Activated B cell treated with CpG ODN at 0.5 μM for 24 hours (primary cell): ENCODE measurements at regions of chr2 and their contacts with region 1.

Region 1: GRCh38 chr2:25276569-25277465 is 64.9 kb downstream of the DNMT3A start:
- DNase-seq: peak; percentile 70
- ATAC-seq: peak; percentile 13
- H3K4me3 Mint-ChIP-seq: peak overlapping the region; percentile 67
- H3K27ac Mint-ChIP-seq: peak overlapping the region; percentile 76
- H3K4me1 Mint-ChIP-seq: peaks cover 88% of the 10 kb centered on the region
- H3K27me3 Mint-ChIP-seq: no peaks in the 10 kb centered on the region
- CTCF ChIP-seq: no peak

Region 2: GRCh38 chr2:25165992-25166875 is 110.6 kb before region 1 on chr2:
- CTCF ChIA-PET with region 1: interaction called, 8 read pairs
- POLR2A ChIA-PET with region 1: interaction called, 3 read pairs
- intact Hi-C with region 1: loop called (anchors 2 kb)
- DNase-seq: peak; percentile 71
- ATAC-seq: peak; percentile 95
- H3K4me3 Mint-ChIP-seq: peak overlapping the region; percentile 38
- H3K27ac Mint-ChIP-seq: peak overlapping the region; percentile 65
- H3K4me1 Mint-ChIP-seq: peaks cover 33% of the 10 kb centered on the region
- H3K27me3 Mint-ChIP-seq: peaks cover 23% of the 10 kb centered on the region
- CTCF ChIP-seq: peak; percentile 20

Region 3: DNA sequence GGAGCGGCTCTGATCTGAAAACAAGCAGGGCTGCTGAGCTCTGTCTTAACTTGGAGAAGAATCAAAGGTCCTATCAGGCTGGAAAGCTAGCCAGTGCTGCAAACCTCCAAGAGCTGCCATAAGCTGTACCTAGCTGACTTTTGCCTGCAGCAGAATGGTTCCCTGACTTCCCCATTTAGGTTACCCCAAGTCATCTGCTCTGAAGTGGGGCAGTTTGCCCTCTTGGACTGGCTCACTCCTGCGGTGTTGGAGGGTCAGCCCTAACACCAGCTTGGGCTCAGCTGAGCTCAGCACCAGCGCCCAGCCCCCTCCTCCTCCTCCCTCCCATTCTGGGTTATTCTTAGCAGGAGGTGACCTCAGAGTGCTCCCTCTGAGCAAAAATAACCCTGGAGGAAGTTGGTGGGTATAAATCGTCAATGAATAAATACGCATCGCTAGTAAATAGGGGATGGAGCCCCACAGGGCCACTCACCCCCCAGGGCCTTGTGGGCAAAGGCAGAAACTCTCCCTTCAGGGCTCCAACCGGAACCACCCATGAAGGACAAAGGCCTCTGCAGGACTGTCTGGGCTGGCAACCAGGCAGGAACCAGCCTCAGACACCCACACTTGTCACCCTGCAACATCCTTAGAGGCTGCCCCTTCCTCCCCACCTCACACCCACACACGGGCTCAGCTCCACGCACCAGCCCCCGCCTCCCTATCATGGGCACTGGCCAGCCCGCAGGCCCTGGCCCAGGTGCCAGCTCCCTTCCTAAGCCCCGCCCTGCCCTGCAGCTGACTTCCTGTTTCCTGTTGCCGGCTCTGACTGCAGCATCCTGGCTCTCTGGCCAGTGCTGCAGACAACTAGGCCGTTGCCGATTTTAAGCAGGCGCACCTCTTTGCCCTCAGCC is 18.0 kb after region 1 on chr2:
- CTCF ChIA-PET with region 1: interaction called, 4 read pairs
- POLR2A ChIA-PET with region 1: interaction called, 21 read pairs
- intact Hi-C with region 1: loop called (anchors 1 kb)
- DNase-seq: peak; percentile 57
- ATAC-seq: peak; percentile 88
- H3K4me3 Mint-ChIP-seq: peak overlapping the region; percentile 71
- H3K27ac Mint-ChIP-seq: peak overlapping the region; percentile 84
- H3K4me1 Mint-ChIP-seq: peaks cover 48% of the 10 kb centered on the region
- H3K27me3 Mint-ChIP-seq: no peaks in the 10 kb centered on the region
- CTCF ChIP-seq: no peak

Region 4: GRCh38 chr2:25376750-25377621 is 100.2 kb after region 1 on chr2:
- CTCF ChIA-PET with region 1: no interaction called
- POLR2A ChIA-PET with region 1: interaction called, 3 read pairs
- intact Hi-C with region 1: loop called (anchors 2 kb)
- DNase-seq: peak; percentile 90
- ATAC-seq: peak; percentile 98
- H3K4me3 Mint-ChIP-seq: peak overlapping the region; percentile 73
- H3K27ac Mint-ChIP-seq: peak overlapping the region; percentile 90
- H3K4me1 Mint-ChIP-seq: peaks cover 35% of the 10 kb centered on the region
- H3K27me3 Mint-ChIP-seq: no peaks in the 10 kb centered on the region
- CTCF ChIP-seq: no peak

Region 5: DNA sequence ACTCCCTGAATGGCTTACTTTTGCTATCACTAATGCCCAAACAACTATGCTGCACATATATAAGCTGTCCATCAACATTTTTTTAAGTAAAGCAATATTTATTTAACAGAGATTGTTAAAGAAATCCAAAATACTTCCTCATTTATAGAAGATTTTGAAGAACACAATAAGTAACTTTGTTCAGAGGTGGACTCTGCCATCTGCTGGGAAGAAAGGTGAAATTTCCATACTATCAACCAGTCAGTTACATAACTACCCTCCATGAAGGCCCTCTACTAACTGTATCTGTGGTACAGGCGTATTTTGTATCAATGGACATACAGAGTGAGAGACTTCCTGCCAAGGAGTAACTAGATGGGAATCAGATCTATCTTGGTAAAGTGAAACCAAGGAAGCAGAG is 290.6 kb after region 1 on chr2:
- CTCF ChIA-PET with region 1: interaction called, 8 read pairs
- POLR2A ChIA-PET with region 1: no interaction called
- intact Hi-C with region 1: loop called (anchors 1 kb)
- DNase-seq: no peak
- ATAC-seq: peak; percentile 53
- H3K4me3 Mint-ChIP-seq: no peak overlapping the region
- H3K27ac Mint-ChIP-seq: no peak overlapping the region
- H3K4me1 Mint-ChIP-seq: peaks cover 27% of the 10 kb centered on the region
- H3K27me3 Mint-ChIP-seq: no peaks in the 10 kb centered on the region
- CTCF ChIP-seq: no peak